Gastrocnemius medialis (tissue), 4 donors: ENCODE measurements at regions of chr5 and their contacts with region 1.

Region 1: DNA sequence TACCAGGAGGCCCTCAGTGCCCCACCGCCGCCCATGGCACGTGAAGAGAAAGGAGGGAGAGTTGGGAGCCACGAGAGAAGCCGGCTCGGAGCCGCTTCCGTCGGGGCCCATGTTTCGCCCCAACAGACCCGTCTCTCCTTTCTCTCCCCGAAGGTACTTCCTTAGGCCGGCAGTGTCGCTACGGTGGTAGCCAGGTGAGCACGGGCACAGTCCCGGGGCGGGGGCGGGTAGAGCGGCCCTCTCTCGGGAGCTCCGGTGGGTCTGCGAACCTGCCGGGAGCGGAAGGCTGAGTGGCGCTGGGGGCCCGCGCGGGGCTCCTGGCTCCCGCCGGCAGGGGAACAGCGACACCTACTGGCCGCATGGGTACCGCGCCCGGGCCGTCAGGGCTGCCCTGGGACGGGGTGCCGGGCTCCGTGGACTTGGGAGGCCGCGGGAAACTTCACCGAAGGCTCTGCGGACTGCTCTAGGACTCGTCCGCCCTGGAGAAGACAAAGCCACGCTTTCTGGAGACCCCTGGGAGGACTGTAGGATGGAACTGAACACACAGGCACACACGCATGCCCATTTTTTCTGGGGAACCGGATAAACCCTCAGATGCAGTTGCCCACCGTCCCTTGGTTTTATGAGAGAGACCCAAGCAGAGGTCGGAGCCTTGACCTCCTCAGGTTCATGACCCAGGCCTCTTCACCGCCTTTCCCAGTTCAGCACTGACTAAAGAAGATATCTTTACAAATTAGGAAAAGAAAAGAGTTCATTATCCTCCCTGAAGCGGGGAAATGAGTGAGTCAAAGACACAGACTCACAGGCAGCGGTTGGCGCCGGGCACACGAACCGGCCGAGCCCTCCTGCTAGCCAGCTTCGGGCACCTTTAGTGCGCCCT is 202.5 kb downstream of the MEF2C start:
- DNase-seq: peak in 1 of 2 donors; percentile 40
- ATAC-seq: peak; percentile 54 to 88
- H3K4me3 ChIP-seq: peak overlapping the region; percentile 40 to 60 (median 47)
- H3K27ac ChIP-seq: no peak overlapping the region
- H3K4me1 ChIP-seq: peaks cover 8 to 15% of the 10 kb centered on the region in 2 donors
- H3K27me3 ChIP-seq: peaks cover 97 to 99% (median 97%) of the 10 kb centered on the region in 3 donors
- CTCF ChIP-seq: peak; percentile 72 to 95 (median 89)
- POLR2A ChIP-seq: no peak

Region 2: DNA sequence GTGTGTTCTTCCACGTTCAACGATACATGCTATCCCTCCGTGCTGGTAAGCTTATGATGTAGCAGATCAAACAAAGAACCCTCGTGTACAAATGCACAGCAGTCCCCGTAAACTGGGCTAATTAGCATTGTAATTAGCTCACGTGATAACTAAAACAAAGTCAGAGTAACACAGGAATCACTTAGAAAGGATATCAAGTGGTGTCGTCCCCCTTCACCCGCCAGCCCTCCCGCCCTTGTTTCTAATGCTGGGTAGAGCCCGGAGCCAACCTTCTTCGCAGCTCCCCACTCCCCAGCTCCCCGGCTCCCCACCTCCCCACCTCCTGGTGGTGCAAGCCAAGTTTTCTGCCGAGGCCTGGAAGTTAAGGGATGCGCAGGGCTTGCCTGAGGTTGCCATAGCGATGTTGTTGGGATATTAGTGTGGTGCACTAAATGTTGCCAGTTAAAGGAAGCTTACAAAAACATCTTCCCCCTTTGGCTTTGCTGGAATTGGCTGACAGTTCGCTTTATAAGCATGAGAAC is 909.8 kb before region 1 on chr5:
- in situ Hi-C with region 1: loop called in 2 of 4 experiments (anchors 10 kb)
- intact Hi-C with region 1: no loop called
- DNase-seq: no peak
- ATAC-seq: no peak
- H3K4me3 ChIP-seq: no peak overlapping the region
- H3K27ac ChIP-seq: no peak overlapping the region
- H3K4me1 ChIP-seq: no peaks in the 10 kb centered on the region
- H3K27me3 ChIP-seq: peaks cover 12 to 21% (median 15%) of the 10 kb centered on the region in 3 donors
- CTCF ChIP-seq: no peak
- POLR2A ChIP-seq: no peak

Region 3: DNA sequence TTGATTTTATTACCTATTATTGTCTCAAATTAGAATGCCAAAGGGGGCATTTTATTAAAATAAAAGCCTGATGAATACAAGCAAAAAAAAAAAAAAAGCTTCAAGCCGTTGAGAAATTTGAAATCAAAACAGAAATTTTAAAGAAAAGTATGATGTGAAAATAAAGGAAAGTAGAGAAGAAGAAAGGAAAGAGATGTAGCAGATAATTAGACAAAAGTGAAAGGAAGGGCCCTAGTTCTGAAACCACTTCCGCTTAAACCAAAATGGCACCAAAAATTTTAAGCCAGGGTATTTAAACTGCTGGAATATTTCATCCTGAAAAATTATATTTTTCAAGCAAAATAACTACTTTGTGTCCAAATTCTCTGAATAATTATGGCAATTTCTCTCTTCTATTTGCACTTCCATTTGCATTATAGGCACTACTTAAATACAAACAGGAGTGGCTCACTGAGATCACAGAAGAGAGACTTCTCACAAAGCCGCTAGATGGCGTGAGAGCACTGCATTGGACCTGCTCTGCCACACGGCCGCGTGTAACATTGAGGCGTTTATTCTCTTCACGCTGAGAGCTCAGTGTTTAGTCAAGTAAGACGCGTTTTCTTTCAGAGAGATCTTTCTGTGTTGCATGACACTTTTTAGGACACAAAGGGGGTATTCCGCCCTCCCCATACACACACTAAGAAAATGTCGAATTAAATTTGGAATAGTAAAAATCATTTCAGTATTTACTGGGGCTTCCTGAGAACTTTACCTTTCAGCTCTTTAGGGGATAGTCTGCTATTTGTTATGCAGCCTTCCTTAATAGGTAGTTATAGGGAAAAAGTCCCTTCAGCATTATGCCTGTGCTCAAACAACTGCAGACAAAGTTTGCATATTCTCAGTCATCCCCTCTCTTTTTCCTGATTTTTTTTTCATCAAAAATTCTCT is 899.4 kb before region 1 on chr5:
- in situ Hi-C with region 1: loop called (anchors 10 kb)
- intact Hi-C with region 1: loop called (anchors 2 kb)
- DNase-seq: peak; percentile 41 to 49
- ATAC-seq: peak; percentile 91 to 99
- H3K4me3 ChIP-seq: no peak overlapping the region
- H3K27ac ChIP-seq: no peak overlapping the region
- H3K4me1 ChIP-seq: no peaks in the 10 kb centered on the region
- H3K27me3 ChIP-seq: peaks cover 0 to 23% (median 0%) of the 10 kb centered on the region in 3 donors
- CTCF ChIP-seq: peak; percentile 70 to 94 (median 80)
- POLR2A ChIP-seq: no peak

Region 4: GRCh38 chr5:88130211-88130815 is 550.2 kb before region 1 on chr5:
- in situ Hi-C with region 1: loop called in 1 of 4 experiments (anchors 10 kb)
- intact Hi-C with region 1: no loop called
- DNase-seq: no peak
- ATAC-seq: no peak
- H3K4me3 ChIP-seq: no peak overlapping the region
- H3K27ac ChIP-seq: no peak overlapping the region
- H3K4me1 ChIP-seq: no peaks in the 10 kb centered on the region
- H3K27me3 ChIP-seq: no peaks in the 10 kb centered on the region
- CTCF ChIP-seq: no peak
- POLR2A ChIP-seq: no peak